CD4-positive, alpha-beta memory T cell (primary cell): ENCODE measurements at regions of chr18 and their contacts with region 1.

Region 1: DNA sequence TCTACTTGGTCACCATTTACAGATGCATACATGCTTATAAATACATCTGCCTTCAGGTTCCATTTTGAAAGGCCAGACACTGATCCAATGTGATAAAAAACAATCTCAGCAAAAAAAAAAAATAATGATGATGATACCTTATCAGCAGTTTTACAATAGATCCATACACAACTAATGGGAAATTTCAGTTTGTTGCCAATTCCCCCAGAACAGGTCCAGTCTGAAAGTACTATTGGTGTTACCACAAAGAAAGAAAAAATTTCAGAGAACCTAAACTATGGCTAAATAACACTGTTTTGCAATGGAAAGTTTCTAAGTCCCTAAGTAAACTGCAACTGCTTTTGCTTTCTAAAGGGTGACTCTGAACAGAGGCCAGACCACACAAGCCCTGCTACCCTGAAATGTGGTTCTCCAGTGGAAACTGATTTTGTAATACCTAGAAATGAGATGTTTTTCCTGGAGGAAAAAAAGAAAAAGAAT is 54.1 kb downstream of the LPIN2 start:
- DNase-seq: peak in 2 of 5 donors; percentile 37 to 64
- H3K4me3 ChIP-seq: peak overlapping the region in 1 of 2 donors; percentile 9
- H3K4me3 Mint-ChIP-seq: peak overlapping the region; percentile 4 to 89 (median 73)
- H3K27ac ChIP-seq: peak overlapping the region; percentile 79
- H3K27ac Mint-ChIP-seq: peak overlapping the region; percentile 88 to 99 (median 98)
- H3K4me1 ChIP-seq: peaks cover 95% of the 10 kb centered on the region
- H3K4me1 Mint-ChIP-seq: peaks cover 68 to 97% (median 85%) of the 10 kb centered on the region in 4 donors
- H3K27me3 ChIP-seq: no peaks in the 10 kb centered on the region
- H3K27me3 Mint-ChIP-seq: no peaks in the 10 kb centered on the region

Region 2: DNA sequence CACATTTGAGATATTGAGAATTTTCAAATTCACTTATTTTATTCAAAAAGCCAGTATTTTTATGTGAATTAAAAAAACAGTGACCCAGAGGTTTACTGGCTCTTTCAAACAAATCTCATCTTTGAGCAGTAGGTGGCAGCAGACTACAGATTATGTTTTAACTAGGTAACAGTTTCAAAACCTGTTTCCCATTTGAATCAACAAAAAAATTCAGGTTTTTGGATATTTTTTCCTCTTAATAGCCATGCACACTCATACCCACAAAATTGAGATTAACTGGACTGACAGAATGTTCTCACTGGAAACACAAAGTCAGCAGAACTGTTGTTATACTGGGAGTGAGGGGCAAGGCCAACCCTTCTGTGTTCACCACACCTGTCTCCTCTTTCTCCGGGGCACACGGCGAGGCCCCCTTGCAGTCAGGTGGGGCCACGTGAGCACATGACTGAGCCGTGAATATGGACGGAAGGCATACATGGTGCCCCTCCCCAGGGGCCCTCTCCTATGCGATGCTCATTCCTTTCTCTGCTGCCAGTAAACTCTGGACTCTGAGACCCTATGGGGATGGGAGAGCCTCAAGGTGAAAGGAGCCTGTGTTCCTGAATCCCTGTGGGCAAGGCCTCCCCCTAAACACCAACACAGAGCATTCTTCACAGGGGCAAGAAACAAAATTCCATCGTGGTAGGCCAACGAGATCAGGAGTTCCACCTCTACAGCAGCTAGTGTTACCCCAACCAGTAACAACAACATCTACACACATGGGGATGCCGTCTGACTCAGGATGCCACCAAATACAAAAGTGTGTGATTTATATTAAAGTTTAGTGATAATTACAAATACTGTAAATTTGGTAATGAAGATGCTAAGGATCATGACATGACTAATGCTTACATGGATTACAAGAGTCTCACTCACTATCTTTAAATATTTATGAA is 26.3 kb before region 1 on chr18:
- CTCF ChIA-PET with region 1: interaction called, 25 read pairs
- POLR2A ChIA-PET with region 1: interaction called, 6 read pairs
- intact Hi-C with region 1: loop called (anchors 2 kb)
- DNase-seq: peak; percentile 59 to 79 (median 73)
- H3K4me3 ChIP-seq: no peak overlapping the region
- H3K4me3 Mint-ChIP-seq: peak overlapping the region in 6 of 8 donors; percentile 18 to 64 (median 44)
- H3K27ac ChIP-seq: peak overlapping the region; percentile 56
- H3K27ac Mint-ChIP-seq: peak overlapping the region; percentile 83 to 94 (median 89)
- H3K4me1 ChIP-seq: peaks cover 36% of the 10 kb centered on the region
- H3K4me1 Mint-ChIP-seq: peaks cover 29 to 43% (median 37%) of the 10 kb centered on the region in 4 donors
- H3K27me3 ChIP-seq: no peaks in the 10 kb centered on the region
- H3K27me3 Mint-ChIP-seq: no peaks in the 10 kb centered on the region

Region 3: GRCh38 chr18:2971741-2972552 is 13.1 kb after region 1 on chr18:
- CTCF ChIA-PET with region 1: interaction called, 81 read pairs
- POLR2A ChIA-PET with region 1: interaction called, 1,352 read pairs
- intact Hi-C with region 1: loop called (anchors 1 kb)
- DNase-seq: peak; percentile 66 to 91 (median 72)
- H3K4me3 ChIP-seq: peak overlapping the region; percentile 34 to 37
- H3K4me3 Mint-ChIP-seq: peak overlapping the region; percentile 82 to 94 (median 88)
- H3K27ac ChIP-seq: peak overlapping the region; percentile 79
- H3K27ac Mint-ChIP-seq: peak overlapping the region; percentile 88 to 98 (median 96)
- H3K4me1 ChIP-seq: peaks cover 100% of the 10 kb centered on the region
- H3K4me1 Mint-ChIP-seq: peaks cover 72 to 96% (median 86%) of the 10 kb centered on the region in 4 donors
- H3K27me3 ChIP-seq: no peaks in the 10 kb centered on the region
- H3K27me3 Mint-ChIP-seq: no peaks in the 10 kb centered on the region

Region 4: GRCh38 chr18:2985628-2986027 is 26.8 kb after region 1 on chr18:
- CTCF ChIA-PET with region 1: interaction called, 304 read pairs
- POLR2A ChIA-PET with region 1: interaction called, 1,352 read pairs
- intact Hi-C with region 1: loop called (anchors 1 kb)
- DNase-seq: peak; percentile 47 to 71 (median 69)
- H3K4me3 ChIP-seq: no peak overlapping the region
- H3K4me3 Mint-ChIP-seq: peak overlapping the region in 1 of 8 donors; percentile 44
- H3K27ac ChIP-seq: no peak overlapping the region
- H3K27ac Mint-ChIP-seq: peak overlapping the region in 4 of 7 donors; percentile 15 to 90 (median 39)
- H3K4me1 ChIP-seq: peaks cover 51% of the 10 kb centered on the region
- H3K4me1 Mint-ChIP-seq: peaks cover 34 to 78% (median 50%) of the 10 kb centered on the region in 4 donors
- H3K27me3 ChIP-seq: no peaks in the 10 kb centered on the region
- H3K27me3 Mint-ChIP-seq: no peaks in the 10 kb centered on the region

Region 5: DNA sequence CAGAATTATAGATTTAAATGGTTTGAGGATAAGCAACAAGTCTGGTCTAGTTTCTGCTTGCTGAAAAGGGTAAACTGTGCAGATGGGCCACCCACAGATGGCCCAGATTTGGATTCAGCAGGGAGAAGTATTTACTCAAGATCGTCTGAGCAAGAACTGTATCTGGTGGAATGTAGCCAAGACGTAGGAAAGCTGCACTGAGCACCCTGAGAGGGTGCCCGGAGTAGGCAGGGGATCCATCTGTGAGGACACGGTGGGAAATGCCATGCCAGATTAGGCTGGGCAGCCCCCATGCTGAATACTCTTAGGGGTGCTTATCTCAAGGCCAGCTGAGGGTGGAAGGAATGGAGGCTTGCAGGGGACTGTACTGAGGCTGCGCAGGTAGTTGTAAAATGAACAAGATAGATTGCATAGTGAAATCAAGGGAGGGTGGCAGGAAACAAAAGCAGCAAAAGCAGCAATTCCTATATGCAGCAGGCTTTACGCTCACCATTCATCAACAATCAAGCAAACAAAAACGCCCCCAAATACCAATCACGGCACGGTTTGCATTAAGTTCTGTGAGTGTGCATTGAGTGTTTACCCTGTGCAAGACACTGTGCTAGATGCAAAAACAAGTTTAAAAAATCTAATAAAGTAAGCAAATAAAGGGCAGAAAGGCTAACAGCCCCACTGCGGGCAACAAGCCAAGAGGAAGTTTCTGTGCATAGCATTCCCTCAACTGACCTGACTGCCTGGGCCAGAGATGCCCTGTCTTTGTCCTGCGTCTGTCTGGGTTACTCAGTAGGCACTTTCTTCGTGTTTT is 86.2 kb after region 1 on chr18:
- CTCF ChIA-PET with region 1: no interaction called
- POLR2A ChIA-PET with region 1: no interaction called
- intact Hi-C with region 1: no loop called
- DNase-seq: no peak
- H3K4me3 ChIP-seq: no peak overlapping the region
- H3K4me3 Mint-ChIP-seq: peak overlapping the region in 1 of 8 donors; percentile 32
- H3K27ac ChIP-seq: no peak overlapping the region
- H3K27ac Mint-ChIP-seq: no peak overlapping the region
- H3K4me1 ChIP-seq: no peaks in the 10 kb centered on the region
- H3K4me1 Mint-ChIP-seq: peaks cover 0 to 10% (median 4%) of the 10 kb centered on the region in 4 donors
- H3K27me3 ChIP-seq: no peaks in the 10 kb centered on the region
- H3K27me3 Mint-ChIP-seq: no peaks in the 10 kb centered on the region

Region 6: DNA sequence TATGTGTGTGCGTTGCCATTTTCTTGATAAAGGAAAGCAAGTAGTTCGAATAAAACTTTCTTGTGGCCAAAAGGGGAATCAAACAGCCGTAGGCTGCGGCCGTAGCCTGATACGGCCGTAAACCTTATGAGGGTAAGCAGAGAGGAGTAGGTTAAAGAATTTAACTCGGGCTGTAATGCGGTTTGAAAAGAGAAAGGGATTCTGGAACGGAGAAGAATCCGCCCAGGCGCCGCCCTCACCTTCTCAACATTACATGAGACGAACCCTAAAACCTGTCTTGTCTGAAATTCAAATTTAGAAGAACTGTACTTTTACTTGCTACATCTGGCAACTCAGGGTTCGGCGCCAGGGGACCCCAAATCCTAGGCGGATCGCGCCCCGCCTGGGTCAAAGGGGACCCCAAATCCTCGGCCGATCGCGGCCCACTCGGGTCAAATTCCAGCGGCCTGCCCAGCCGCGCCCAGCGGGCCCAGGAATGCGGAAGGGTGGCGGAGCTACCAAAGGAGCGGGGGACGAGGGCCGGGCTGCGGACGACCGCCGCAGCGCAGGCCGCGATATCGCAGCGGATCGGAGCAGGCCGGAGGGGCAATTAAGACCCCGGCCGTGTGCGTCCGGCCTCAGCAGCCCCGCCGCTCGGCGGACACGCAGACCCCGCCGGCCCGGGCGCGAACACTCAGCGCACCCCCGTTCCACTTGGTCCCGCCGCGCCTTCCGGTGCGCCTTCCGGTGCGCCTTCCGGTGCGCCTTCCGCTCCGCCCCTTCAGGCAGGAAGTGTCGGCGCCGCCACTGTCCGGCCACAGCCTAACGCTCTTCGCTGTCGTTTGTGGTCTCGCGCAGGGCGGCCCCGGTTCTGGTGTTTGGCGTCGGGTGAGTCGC is 302.8 kb after region 1 on chr18 and contains the start of gene MYL12B:
- CTCF ChIA-PET with region 1: no interaction called
- POLR2A ChIA-PET with region 1: interaction called, 14 read pairs
- intact Hi-C with region 1: no loop called
- DNase-seq: peak; percentile 83 to 91 (median 86)
- H3K4me3 ChIP-seq: peak within 1 kb of the TSS; percentile 89 to 94
- H3K4me3 Mint-ChIP-seq: peak within 1 kb of the TSS; percentile 94 to 100 (median 98)
- H3K27ac ChIP-seq: peak within 1 kb of the TSS; percentile 90
- H3K27ac Mint-ChIP-seq: peak within 1 kb of the TSS; percentile 98 to 100 (median 99)
- H3K4me1 ChIP-seq: peaks cover 81% of the 10 kb centered on the region
- H3K4me1 Mint-ChIP-seq: peaks cover 57 to 92% (median 70%) of the 10 kb centered on the region in 4 donors
- H3K27me3 ChIP-seq: no peaks in the 10 kb centered on the region
- H3K27me3 Mint-ChIP-seq: no peaks in the 10 kb centered on the region
- total RNA-seq, gene MYL12B: 199 to 219 TPM